B cell (primary cell): ENCODE measurements at regions of chr15 and their contacts with region 1.

Region 1: GRCh38 chr15:45349623-45350022 is 28.7 kb downstream of the GATM start:
- DNase-seq: no peak
- ATAC-seq: no peak
- H3K4me3 ChIP-seq: no peak overlapping the region
- H3K4me3 Mint-ChIP-seq: no peak overlapping the region
- H3K27ac ChIP-seq: no peak overlapping the region
- H3K27ac Mint-ChIP-seq: no peak overlapping the region
- H3K4me1 ChIP-seq: no peaks in the 10 kb centered on the region
- H3K4me1 Mint-ChIP-seq: no peaks in the 10 kb centered on the region
- H3K27me3 ChIP-seq: peaks cover 0 to 14% (median 7%) of the 10 kb centered on the region in 4 experiments
- H3K27me3 Mint-ChIP-seq: peaks cover 35% of the 10 kb centered on the region
- CTCF ChIP-seq: no peak

Region 2: DNA sequence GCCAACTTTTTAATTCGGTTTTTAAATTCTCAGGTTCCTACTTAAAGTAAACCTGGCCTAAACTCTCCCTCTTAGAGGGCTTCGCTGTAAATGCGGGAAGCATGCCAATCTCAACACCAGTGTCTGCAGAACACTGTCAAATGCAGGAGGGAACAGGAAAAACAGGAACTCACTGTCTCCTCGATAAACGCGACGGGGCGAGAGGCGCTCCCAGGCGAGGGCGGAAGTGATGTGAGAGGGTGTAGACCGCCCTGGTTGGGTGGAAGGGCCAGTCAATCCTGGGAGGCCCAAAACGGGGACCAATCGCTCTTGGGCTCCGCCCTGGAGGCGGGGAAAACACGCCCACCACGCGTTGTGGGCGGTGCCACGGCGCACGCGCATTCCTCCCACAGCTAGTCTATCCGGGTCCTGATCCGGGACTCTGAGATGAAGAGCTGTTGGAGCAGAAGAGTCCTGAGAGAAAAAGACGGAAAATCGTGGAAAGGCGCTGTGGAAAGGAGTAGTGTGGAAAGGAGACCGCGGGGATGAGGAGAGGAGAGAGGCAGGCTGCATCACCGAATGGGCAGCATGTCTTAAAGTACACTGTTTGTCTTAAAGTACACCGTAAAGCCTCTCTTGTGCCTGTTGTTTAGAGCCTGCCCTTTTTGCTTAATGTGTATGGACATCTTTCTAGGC is 70.5 kb before region 1 on chr15:
- CTCF ChIA-PET with region 1: no interaction called
- POLR2A ChIA-PET with region 1: interaction called, 10 read pairs
- intact Hi-C with region 1: no loop called
- DNase-seq: peak; percentile 97
- ATAC-seq: peak; percentile 99
- H3K4me3 ChIP-seq: peak overlapping the region; percentile 58 to 88 (median 69)
- H3K4me3 Mint-ChIP-seq: peak overlapping the region; percentile 94
- H3K27ac ChIP-seq: peak overlapping the region; percentile 66 to 68
- H3K27ac Mint-ChIP-seq: peak overlapping the region; percentile 88
- H3K4me1 ChIP-seq: peaks cover 12 to 16% of the 10 kb centered on the region in 2 donors
- H3K4me1 Mint-ChIP-seq: peaks cover 13% of the 10 kb centered on the region
- H3K27me3 ChIP-seq: peaks cover 0 to 5% (median 0%) of the 10 kb centered on the region in 4 experiments
- H3K27me3 Mint-ChIP-seq: peaks cover 9% of the 10 kb centered on the region
- CTCF ChIP-seq: no peak

Region 3: GRCh38 chr15:45386420-45386819 is 36.8 kb after region 1 on chr15:
- CTCF ChIA-PET with region 1: no interaction called
- POLR2A ChIA-PET with region 1: no interaction called
- intact Hi-C with region 1: no loop called
- DNase-seq: no peak
- ATAC-seq: no peak
- H3K4me3 ChIP-seq: no peak overlapping the region
- H3K4me3 Mint-ChIP-seq: no peak overlapping the region
- H3K27ac ChIP-seq: no peak overlapping the region
- H3K27ac Mint-ChIP-seq: no peak overlapping the region
- H3K4me1 ChIP-seq: peaks cover 3% of the 10 kb centered on the region in 2 donors
- H3K4me1 Mint-ChIP-seq: peaks cover 7% of the 10 kb centered on the region
- H3K27me3 ChIP-seq: no peaks in the 10 kb centered on the region
- H3K27me3 Mint-ChIP-seq: peaks cover 4% of the 10 kb centered on the region
- CTCF ChIP-seq: no peak

Region 4: DNA sequence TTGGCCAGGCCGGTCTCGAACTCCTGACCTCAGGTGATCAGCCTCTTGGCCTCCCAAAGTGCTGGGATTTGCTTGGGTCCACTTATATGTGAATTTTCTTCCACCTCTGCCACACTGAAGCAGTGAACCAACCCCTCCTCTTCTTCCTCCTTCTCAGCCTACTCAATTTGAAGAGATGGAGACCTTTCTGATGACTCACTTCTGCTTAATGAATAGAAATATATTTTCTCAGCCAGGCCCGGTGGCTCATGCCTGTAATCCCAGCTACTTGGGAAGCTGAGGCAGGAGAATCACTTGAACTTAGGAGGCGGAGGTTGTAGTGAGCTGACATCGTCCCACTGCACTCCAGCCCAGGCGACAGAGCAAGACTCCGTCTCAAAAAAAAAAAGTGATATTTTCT is 75.5 kb after region 1 on chr15:
- CTCF ChIA-PET with region 1: no interaction called
- POLR2A ChIA-PET with region 1: no interaction called
- intact Hi-C with region 1: no loop called
- DNase-seq: no peak
- ATAC-seq: no peak
- H3K4me3 ChIP-seq: no peak overlapping the region
- H3K4me3 Mint-ChIP-seq: no peak overlapping the region
- H3K27ac ChIP-seq: no peak overlapping the region
- H3K27ac Mint-ChIP-seq: no peak overlapping the region
- H3K4me1 ChIP-seq: peaks cover 0 to 3% of the 10 kb centered on the region in 2 donors
- H3K4me1 Mint-ChIP-seq: no peaks in the 10 kb centered on the region
- H3K27me3 ChIP-seq: peaks cover 0 to 7% (median 1%) of the 10 kb centered on the region in 4 experiments
- H3K27me3 Mint-ChIP-seq: no peaks in the 10 kb centered on the region
- CTCF ChIP-seq: no peak

Region 5: GRCh38 chr15:45468294-45468693 is 118.7 kb after region 1 on chr15:
- CTCF ChIA-PET with region 1: no interaction called
- POLR2A ChIA-PET with region 1: no interaction called
- intact Hi-C with region 1: no loop called
- DNase-seq: no peak
- ATAC-seq: no peak
- H3K4me3 ChIP-seq: no peak overlapping the region
- H3K4me3 Mint-ChIP-seq: no peak overlapping the region
- H3K27ac ChIP-seq: no peak overlapping the region
- H3K27ac Mint-ChIP-seq: no peak overlapping the region
- H3K4me1 ChIP-seq: no peaks in the 10 kb centered on the region
- H3K4me1 Mint-ChIP-seq: no peaks in the 10 kb centered on the region
- H3K27me3 ChIP-seq: peaks cover 0 to 8% (median 0%) of the 10 kb centered on the region in 4 experiments
- H3K27me3 Mint-ChIP-seq: peaks cover 17% of the 10 kb centered on the region
- CTCF ChIP-seq: no peak